ENCODE measurements at regions of chr2 and their contacts with region 1.

Region 1: DNA sequence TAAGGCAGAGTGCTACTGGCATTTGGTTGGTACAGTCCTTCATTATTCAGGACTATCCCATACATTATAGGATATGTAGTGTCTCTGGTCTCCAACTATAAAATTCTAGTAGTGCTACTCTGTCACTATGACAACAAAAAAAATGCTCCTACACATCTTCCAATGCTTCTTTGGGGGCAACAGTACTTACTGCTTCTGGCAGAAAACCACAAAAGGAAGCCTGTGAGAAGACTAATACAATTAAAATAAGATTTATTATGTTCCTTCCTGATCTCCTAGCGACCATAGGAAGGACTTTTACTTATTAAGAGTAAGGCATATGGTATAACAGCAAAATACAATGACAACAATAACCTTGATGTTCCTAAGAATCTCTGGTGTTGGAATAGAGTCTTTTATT is 48.4 kb upstream of the CPO start:
- DNase-seq: no peak
- H3K4me3 ChIP-seq: no peak overlapping the region
- H3K27ac ChIP-seq: no peak overlapping the region
- H3K4me1 ChIP-seq: no peaks in the 10 kb centered on the region
- H3K27me3 ChIP-seq: no peaks in the 10 kb centered on the region
- CTCF ChIP-seq: no peak

Region 2: GRCh38 chr2:206805887-206806607 is 84.9 kb before region 1 on chr2:
- CTCF ChIA-PET with region 1: no interaction called
- POLR2A ChIA-PET with region 1: no interaction called
- intact Hi-C with region 1: no loop called
- DNase-seq: no peak
- H3K4me3 ChIP-seq: no peak overlapping the region
- H3K27ac ChIP-seq: no peak overlapping the region
- H3K4me1 ChIP-seq: no peaks in the 10 kb centered on the region
- H3K27me3 ChIP-seq: no peaks in the 10 kb centered on the region
- CTCF ChIP-seq: no peak

Region 3: DNA sequence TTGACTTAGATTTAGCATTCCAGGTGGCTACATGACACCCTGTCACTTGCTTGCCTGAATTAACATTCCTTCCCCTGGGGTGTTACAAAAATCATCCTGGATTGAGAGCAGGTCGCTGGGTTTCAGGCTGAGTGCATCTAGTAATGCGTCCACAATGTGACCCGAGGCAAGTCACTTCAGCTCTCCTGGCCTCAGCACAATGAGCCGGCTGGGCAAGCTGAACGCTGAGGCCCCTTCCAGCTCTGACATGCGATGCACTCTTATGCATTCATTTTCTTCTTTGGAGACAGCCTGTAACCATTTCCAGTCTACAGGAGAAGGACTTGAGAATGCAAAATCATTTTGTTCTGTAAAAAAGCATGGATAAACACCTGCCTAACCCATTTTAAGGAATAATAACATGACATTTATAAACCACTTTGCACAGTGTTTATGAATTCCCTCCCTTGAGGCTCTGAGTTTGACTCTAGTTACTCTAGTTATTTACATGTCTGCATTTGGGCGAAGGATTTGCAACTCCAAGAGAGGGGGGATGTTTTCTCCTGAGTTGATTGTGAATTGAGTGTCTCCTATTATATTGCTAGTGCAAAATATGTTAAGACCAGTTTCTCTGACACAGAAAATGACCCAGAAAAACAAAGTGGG is 14.6 kb before region 1 on chr2:
- CTCF ChIA-PET with region 1: no interaction called
- POLR2A ChIA-PET with region 1: no interaction called
- intact Hi-C with region 1: loop called (anchors 1 kb)
- DNase-seq: peak in 1 of 2 experiments; percentile 52
- H3K4me3 ChIP-seq: no peak overlapping the region
- H3K27ac ChIP-seq: no peak overlapping the region
- H3K4me1 ChIP-seq: peaks cover 16% of the 10 kb centered on the region
- H3K27me3 ChIP-seq: no peaks in the 10 kb centered on the region
- CTCF ChIP-seq: no peak

Region 4: DNA sequence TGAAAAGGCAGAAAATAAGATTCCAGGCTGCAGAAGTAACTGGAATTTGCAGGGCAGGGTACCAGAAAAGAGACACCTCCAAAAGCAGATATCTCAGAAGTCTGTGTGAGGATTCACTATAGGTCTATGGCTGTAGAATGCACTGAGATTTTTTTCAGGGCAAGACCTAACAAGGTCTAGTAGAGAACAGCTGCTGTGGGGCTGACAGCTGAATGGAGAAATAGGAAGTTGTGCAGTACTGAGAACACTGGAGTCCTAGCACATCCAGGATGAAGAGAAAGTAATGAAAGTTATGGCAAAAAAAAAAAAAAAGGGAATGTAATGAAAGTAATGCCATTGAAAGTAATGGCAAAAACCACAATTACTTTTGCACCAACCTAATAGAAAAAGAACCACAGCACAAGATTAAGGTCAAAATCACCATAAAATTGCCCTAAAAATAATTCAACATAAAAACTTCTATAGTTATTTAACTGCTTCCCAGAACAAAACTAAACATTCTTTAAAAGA is 105.7 kb after region 1 on chr2:
- CTCF ChIA-PET with region 1: no interaction called
- POLR2A ChIA-PET with region 1: no interaction called
- intact Hi-C with region 1: no loop called
- DNase-seq: no peak
- H3K4me3 ChIP-seq: no peak overlapping the region
- H3K27ac ChIP-seq: no peak overlapping the region
- H3K4me1 ChIP-seq: no peaks in the 10 kb centered on the region
- H3K27me3 ChIP-seq: no peaks in the 10 kb centered on the region
- CTCF ChIP-seq: no peak

Region 5: DNA sequence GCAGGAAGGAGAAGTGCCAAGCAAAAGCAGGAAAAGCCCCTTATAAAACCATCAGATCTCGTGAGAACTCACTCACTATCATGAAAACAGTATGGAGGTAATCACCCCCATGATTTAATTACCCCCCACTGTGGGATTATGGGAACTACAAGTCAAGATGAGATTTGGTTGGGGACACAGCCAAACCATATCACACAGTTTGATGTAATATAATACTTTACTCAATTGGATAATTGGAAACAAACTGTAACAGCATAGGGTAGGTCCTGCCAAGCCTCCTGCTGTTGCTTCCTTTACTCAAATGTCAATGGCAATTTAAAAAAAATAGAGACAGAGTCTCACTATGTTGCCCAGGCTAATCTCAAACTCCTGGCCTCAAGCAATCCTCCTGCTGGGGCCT is 749.7 kb after region 1 on chr2:
- CTCF ChIA-PET with region 1: no interaction called
- POLR2A ChIA-PET with region 1: no interaction called
- intact Hi-C with region 1: no loop called
- DNase-seq: no peak
- H3K4me3 ChIP-seq: no peak overlapping the region
- H3K27ac ChIP-seq: no peak overlapping the region
- H3K4me1 ChIP-seq: no peaks in the 10 kb centered on the region; the same call in 1 of the 2 replicates
- H3K27me3 ChIP-seq: no peaks in the 10 kb centered on the region
- CTCF ChIP-seq: no peak

Measured in PC-9 (cell line).